ENCODE measurements at regions of chr11 and their contacts with region 1.

Region 1: DNA sequence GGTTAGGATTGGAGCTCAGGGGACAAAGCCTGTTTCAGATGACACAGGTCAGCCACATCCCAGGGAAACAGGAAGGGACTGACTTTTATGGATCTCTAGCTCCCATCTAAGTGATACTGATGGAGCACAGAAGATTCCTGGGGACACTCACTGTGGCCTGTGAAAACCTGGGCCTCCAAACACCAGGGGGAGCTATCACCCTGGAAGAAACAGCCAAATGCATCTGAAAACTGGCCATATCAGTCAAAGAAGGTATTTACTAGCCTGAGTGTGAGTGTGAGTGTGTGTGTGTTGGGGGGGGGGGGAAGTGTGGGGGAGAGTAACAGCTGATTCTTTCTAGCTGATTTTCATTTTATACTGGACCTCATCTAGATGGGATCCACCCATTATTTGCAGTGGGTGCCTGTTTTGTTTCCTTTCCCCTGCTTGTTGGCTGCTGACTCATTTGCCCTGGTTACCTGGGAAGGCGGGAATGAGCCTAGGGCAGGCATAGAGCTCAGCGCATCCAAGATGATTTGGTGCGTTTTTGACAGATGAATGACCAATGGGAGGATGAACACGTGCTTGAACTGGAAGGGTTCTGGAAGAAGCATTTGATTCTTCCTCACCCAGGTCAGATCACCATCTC is 284.0 kb downstream of the KIRREL3 start:
- DNase-seq: peak in 1 of 3 donors; percentile 21
- H3K4me3 ChIP-seq: no peak overlapping the region
- H3K4me3 Mint-ChIP-seq: no peak overlapping the region
- H3K27ac ChIP-seq: no peak overlapping the region
- H3K27ac Mint-ChIP-seq: no peak overlapping the region
- H3K4me1 ChIP-seq: no peaks in the 10 kb centered on the region
- H3K4me1 Mint-ChIP-seq: peaks cover 8% of the 10 kb centered on the region
- H3K27me3 ChIP-seq: peaks cover 0 to 17% of the 10 kb centered on the region in 2 donors
- H3K27me3 Mint-ChIP-seq: peaks cover 21 to 25% (median 22%) of the 10 kb centered on the region in 3 donors
- CTCF ChIP-seq: peak; percentile 60

Region 2: GRCh38 chr11:126989942-126990715 is 273.6 kb after region 1 on chr11:
- intact Hi-C with region 1: loop called in 1 of 2 experiments (anchors 1 kb)
- DNase-seq: peak; percentile 1 to 42 (median 9)
- H3K4me3 ChIP-seq: no peak overlapping the region
- H3K4me3 Mint-ChIP-seq: no peak overlapping the region
- H3K27ac ChIP-seq: no peak overlapping the region
- H3K27ac Mint-ChIP-seq: no peak overlapping the region
- H3K4me1 ChIP-seq: no peaks in the 10 kb centered on the region
- H3K4me1 Mint-ChIP-seq: no peaks in the 10 kb centered on the region
- H3K27me3 ChIP-seq: peaks cover 2 to 10% of the 10 kb centered on the region in 2 donors
- H3K27me3 Mint-ChIP-seq: peaks cover 7 to 22% (median 12%) of the 10 kb centered on the region in 3 donors
- CTCF ChIP-seq: peak; percentile 90

Measured in CD14-positive monocyte (primary cell).